Naive thymus-derived CD4-positive, alpha-beta T cell (primary cell): ENCODE measurements at regions of chr10 and their contacts with region 1.

Region 1: GRCh38 chr10:17923728-17924127 is 28.0 kb upstream of the SLC39A12 start:
- DNase-seq: no peak
- ATAC-seq: no peak
- H3K4me3 ChIP-seq: no peak overlapping the region
- H3K4me3 Mint-ChIP-seq: no peak overlapping the region
- H3K27ac ChIP-seq: no peak overlapping the region
- H3K27ac Mint-ChIP-seq: no peak overlapping the region
- H3K4me1 ChIP-seq: no peaks in the 10 kb centered on the region
- H3K4me1 Mint-ChIP-seq: no peaks in the 10 kb centered on the region
- H3K27me3 ChIP-seq: no peaks in the 10 kb centered on the region
- H3K27me3 Mint-ChIP-seq: no peaks in the 10 kb centered on the region

Region 2: GRCh38 chr10:16612115-16612980 is 1311.4 kb before region 1 on chr10:
- CTCF ChIA-PET with region 1: no interaction called
- POLR2A ChIA-PET with region 1: no interaction called
- intact Hi-C with region 1: loop called in 1 of 2 experiments (anchors 5 kb)
- DNase-seq: peak in 3 of 9 donors; percentile 1 to 17 (median 3)
- ATAC-seq: no peak
- H3K4me3 ChIP-seq: no peak overlapping the region
- H3K4me3 Mint-ChIP-seq: no peak overlapping the region
- H3K27ac ChIP-seq: no peak overlapping the region
- H3K27ac Mint-ChIP-seq: no peak overlapping the region
- H3K4me1 ChIP-seq: no peaks in the 10 kb centered on the region
- H3K4me1 Mint-ChIP-seq: no peaks in the 10 kb centered on the region
- H3K27me3 ChIP-seq: no peaks in the 10 kb centered on the region
- H3K27me3 Mint-ChIP-seq: no peaks in the 10 kb centered on the region

Region 3: GRCh38 chr10:17872191-17873091 is 51.3 kb before region 1 on chr10:
- CTCF ChIA-PET with region 1: no interaction called
- POLR2A ChIA-PET with region 1: no interaction called
- intact Hi-C with region 1: no loop called
- DNase-seq: peak in 1 of 9 donors; percentile 2
- ATAC-seq: no peak
- H3K4me3 ChIP-seq: no peak overlapping the region
- H3K4me3 Mint-ChIP-seq: no peak overlapping the region
- H3K27ac ChIP-seq: no peak overlapping the region
- H3K27ac Mint-ChIP-seq: no peak overlapping the region
- H3K4me1 ChIP-seq: no peaks in the 10 kb centered on the region
- H3K4me1 Mint-ChIP-seq: no peaks in the 10 kb centered on the region
- H3K27me3 ChIP-seq: no peaks in the 10 kb centered on the region
- H3K27me3 Mint-ChIP-seq: peaks cover 0 to 8% (median 0%) of the 10 kb centered on the region in 5 donors